CD4-positive, alpha-beta T cell (primary cell): ENCODE measurements at regions of chr10 and their contacts with region 1.

Region 1: DNA sequence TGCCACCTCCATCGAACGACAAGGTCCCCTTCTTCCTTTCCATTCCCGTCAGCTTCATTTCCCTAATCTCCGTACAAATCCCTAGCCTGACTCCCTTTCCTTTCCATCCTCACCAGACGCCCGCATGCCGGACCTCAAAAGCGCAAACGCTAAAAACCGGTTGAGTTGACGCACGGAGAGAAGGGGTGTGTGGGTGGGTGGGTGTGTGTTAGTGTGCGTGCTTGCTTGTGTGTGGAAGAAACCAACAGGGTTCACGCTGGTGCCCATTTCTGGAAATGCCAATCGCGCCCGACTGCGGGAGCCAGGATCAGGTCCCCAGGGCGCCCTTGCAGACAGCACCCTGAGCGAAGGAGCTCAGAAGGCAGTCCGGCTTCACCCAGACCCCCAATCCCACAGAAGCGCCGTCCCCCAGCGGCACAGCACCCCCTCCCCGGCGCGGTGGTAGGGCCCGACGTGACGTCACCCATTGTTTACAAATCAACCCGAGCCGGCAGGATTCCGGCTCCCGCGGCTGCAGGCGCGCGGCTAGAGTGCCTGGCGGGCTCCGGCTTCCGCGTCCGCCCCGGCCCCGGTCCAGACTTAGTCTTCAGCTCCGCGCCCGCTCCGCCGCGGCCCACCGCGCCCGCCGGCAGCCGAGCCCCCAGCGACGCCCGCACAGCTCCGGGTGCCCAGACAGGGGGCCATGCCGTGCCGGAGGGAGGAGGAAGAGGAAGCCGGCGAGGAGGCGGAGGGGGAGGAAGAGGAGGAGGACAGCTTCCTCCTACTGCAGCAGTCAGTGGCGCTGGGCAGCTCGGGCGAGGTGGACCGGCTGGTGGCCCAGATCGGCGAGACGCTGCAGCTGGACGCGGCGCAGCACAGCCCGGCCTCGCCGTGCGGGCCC is at the start of gene FRAT1:
- DNase-seq: peak; percentile 85 to 96 (median 89)
- ATAC-seq: peak; percentile 73
- H3K4me3 ChIP-seq: peak within 1 kb of the TSS; percentile 80
- H3K4me3 Mint-ChIP-seq: peak within 1 kb of the TSS; percentile 97
- H3K27ac ChIP-seq: peak within 1 kb of the TSS; percentile 99 to 100
- H3K27ac Mint-ChIP-seq: peak within 1 kb of the TSS; percentile 98
- H3K4me1 ChIP-seq: peaks cover 36% of the 10 kb centered on the region
- H3K4me1 Mint-ChIP-seq: peaks cover 38% of the 10 kb centered on the region
- H3K27me3 ChIP-seq: no peaks in the 10 kb centered on the region
- H3K27me3 Mint-ChIP-seq: no peaks in the 10 kb centered on the region
- CTCF ChIP-seq: no peak
- total RNA-seq, gene FRAT1: 45.2 to 45.5 TPM

Region 2: GRCh38 chr10:97170326-97170725 is 148.7 kb before region 1 on chr10:
- CTCF ChIA-PET with region 1: no interaction called
- POLR2A ChIA-PET with region 1: no interaction called
- intact Hi-C with region 1: no loop called
- DNase-seq: no peak
- ATAC-seq: no peak
- H3K4me3 ChIP-seq: no peak overlapping the region
- H3K4me3 Mint-ChIP-seq: no peak overlapping the region
- H3K27ac ChIP-seq: no peak overlapping the region
- H3K27ac Mint-ChIP-seq: no peak overlapping the region
- H3K4me1 ChIP-seq: no peaks in the 10 kb centered on the region
- H3K4me1 Mint-ChIP-seq: no peaks in the 10 kb centered on the region
- H3K27me3 ChIP-seq: peaks cover 0 to 10% of the 10 kb centered on the region in 2 experiments
- H3K27me3 Mint-ChIP-seq: peaks cover 4% of the 10 kb centered on the region
- CTCF ChIP-seq: no peak

Region 3: DNA sequence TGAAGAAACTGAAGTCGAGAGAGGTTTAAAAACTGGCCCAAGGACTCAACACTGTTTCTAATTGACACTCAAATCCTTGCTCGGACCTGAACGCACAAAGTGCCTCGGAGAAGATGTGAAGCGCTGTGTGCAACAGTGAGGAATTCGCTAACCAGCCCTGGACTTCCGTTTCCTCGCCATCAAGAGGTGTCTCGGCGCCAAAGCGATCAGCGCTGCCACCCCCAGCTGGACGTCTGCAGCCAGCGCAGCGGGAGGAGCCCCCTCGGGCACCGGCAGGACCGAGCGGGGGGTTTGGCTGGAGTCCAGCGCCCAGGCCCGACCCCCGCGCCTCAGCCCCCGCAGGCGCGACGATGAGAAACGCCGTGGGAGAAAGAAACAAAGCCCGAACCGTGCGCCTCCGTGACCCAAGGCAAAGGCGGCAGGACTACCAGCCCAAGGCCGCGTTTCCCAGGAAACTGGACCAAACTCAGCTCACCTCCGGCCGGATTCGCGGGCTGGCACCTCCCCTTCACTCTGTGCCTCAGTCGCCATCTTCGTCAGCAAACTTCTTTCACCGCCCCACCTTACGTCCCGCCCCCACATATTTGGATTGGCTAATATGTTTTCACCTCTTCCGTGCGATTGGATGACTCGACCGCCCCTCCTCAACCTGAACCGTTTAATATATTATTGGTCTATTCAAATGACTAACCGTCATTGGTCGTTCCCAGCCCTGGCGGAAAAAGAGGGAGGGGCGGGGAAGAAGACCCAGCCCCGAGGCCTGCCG is 26.7 kb before region 1 on chr10 and contains the start of gene ARHGAP19:
- CTCF ChIA-PET with region 1: no interaction called
- POLR2A ChIA-PET with region 1: interaction called, 25 read pairs
- intact Hi-C with region 1: loop called (anchors 1 kb)
- DNase-seq: peak; percentile 86 to 97 (median 90)
- ATAC-seq: peak; percentile 99
- H3K4me3 ChIP-seq: peak within 1 kb of the TSS; percentile 72
- H3K4me3 Mint-ChIP-seq: peak within 1 kb of the TSS; percentile 95
- H3K27ac ChIP-seq: peak within 1 kb of the TSS; percentile 49 to 65
- H3K27ac Mint-ChIP-seq: peak within 1 kb of the TSS; percentile 50
- H3K4me1 ChIP-seq: peaks cover 13% of the 10 kb centered on the region
- H3K4me1 Mint-ChIP-seq: peaks cover 18% of the 10 kb centered on the region
- H3K27me3 ChIP-seq: no peaks in the 10 kb centered on the region
- H3K27me3 Mint-ChIP-seq: no peaks in the 10 kb centered on the region
- CTCF ChIP-seq: no peak
- total RNA-seq, gene ARHGAP19: 6.9 to 8.8 TPM

Region 4: GRCh38 chr10:97349752-97350513 is 30.9 kb after region 1 on chr10:
- CTCF ChIA-PET with region 1: no interaction called
- POLR2A ChIA-PET with region 1: no interaction called
- intact Hi-C with region 1: no loop called
- DNase-seq: no peak
- ATAC-seq: no peak
- H3K4me3 ChIP-seq: no peak overlapping the region
- H3K4me3 Mint-ChIP-seq: no peak overlapping the region
- H3K27ac ChIP-seq: no peak overlapping the region
- H3K27ac Mint-ChIP-seq: no peak overlapping the region
- H3K4me1 ChIP-seq: no peaks in the 10 kb centered on the region
- H3K4me1 Mint-ChIP-seq: no peaks in the 10 kb centered on the region
- H3K27me3 ChIP-seq: no peaks in the 10 kb centered on the region
- H3K27me3 Mint-ChIP-seq: no peaks in the 10 kb centered on the region
- CTCF ChIP-seq: no peak

Region 5: DNA sequence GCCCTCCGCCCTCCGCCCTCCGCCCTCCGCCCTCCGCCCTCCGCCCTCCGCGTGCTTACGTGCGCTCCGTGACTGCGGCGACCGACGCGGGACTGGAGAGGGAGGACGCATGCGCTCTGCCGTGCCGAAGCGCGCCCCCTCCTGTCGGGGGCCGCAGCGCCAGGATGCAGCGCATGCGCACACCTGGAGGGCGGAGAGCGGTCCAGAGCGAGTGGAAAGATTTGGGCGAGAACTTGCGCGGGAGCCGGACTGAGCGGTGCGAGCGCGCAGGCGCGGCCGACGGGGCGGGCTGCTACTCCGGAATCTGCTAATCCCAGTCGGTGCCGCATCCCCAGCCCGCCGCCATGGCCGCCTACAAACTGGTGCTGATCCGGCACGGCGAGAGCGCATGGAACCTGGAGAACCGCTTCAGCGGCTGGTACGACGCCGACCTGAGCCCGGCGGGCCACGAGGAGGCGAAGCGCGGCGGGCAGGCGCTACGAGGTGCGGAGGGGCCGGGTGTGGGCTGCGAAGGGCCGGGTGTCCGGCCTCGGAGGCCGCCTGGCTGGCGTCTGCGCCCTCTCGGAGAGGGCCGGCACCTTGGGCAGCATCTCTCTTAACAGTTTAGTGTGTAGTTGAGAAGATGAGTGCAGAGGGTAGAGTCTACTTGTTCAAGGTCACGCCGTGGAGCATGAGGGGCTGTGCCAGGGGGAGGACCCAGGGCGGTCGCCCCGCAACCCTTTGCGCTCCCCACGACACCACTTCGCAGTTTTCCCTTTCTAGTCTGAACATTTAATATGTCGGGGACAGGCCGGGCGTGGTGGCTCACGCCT is 107.2 kb after region 1 on chr10 and contains the start of gene PGAM1:
- CTCF ChIA-PET with region 1: no interaction called
- POLR2A ChIA-PET with region 1: no interaction called
- intact Hi-C with region 1: loop called in 1 of 2 experiments (anchors 2 kb)
- DNase-seq: peak; percentile 90 to 99 (median 94)
- ATAC-seq: peak; percentile 82
- H3K4me3 ChIP-seq: peak within 1 kb of the TSS; percentile 78
- H3K4me3 Mint-ChIP-seq: peak within 1 kb of the TSS; percentile 95
- H3K27ac ChIP-seq: peak within 1 kb of the TSS; percentile 75 to 85
- H3K27ac Mint-ChIP-seq: peak within 1 kb of the TSS; percentile 89
- H3K4me1 ChIP-seq: peaks cover 43% of the 10 kb centered on the region
- H3K4me1 Mint-ChIP-seq: peaks cover 46% of the 10 kb centered on the region
- H3K27me3 ChIP-seq: no peaks in the 10 kb centered on the region
- H3K27me3 Mint-ChIP-seq: no peaks in the 10 kb centered on the region
- CTCF ChIP-seq: peak; percentile 64
- total RNA-seq, gene PGAM1: 50.7 to 55.5 TPM